ENCODE measurements at regions of chr1 and their contacts with region 1.

Region 1: DNA sequence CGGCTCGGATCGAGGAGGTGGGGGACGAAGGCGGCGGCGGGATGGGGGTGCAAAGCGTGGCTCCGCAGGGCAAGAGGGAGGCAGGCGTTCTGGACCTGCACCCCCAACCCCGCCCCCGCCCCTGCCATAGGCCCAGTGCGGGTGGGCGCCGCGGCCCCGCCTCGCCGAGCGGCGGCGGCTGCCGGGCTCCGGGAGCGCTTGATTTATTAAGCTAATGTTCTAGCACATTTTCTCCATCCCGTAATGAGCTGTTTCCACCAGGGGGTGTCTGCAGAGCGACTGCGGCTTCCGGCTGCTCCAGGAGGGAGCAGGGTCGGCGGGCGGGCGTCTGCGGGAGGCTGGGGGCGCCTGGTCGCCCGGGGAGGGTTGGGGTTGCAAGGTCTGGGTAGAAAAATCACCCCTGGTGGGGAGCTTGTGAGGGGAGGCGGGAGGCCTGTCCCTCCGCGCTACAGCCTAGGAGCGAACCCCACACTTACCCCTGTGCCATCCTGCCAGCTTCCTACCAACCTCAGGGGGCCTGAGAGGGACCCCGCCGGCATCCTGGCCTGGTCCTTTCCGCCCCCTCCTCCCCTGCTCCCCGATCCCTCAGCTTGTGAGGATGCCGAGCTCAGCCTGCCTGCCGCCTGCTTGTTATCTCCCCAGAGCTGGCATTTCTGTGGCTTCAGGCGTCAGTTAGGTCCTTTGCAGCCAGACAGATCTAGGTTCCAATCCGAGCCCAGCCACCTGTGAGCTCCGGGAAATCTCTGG is 48.5 kb upstream of the ACOT11 start:
- DNase-seq: peak in 1 of 3 donors; percentile 32
- ATAC-seq: peak; percentile 66 to 81 (median 78)
- H3K4me3 ChIP-seq: peak overlapping the region; percentile 14 to 46 (median 34)
- H3K27ac ChIP-seq: no peak overlapping the region
- H3K4me1 ChIP-seq: peaks cover 0 to 12% (median 0%) of the 10 kb centered on the region in 4 donors
- H3K27me3 ChIP-seq: no peaks in the 10 kb centered on the region
- CTCF ChIP-seq: peak; percentile 32 to 41 (median 40)
- POLR2A ChIP-seq: no peak

Region 2: GRCh38 chr1:54394104-54394503 is 105.4 kb before region 1 on chr1:
- intact Hi-C with region 1: no loop called
- DNase-seq: no peak
- ATAC-seq: no peak
- H3K4me3 ChIP-seq: no peak overlapping the region
- H3K27ac ChIP-seq: no peak overlapping the region
- H3K4me1 ChIP-seq: peaks cover 0 to 24% (median 12%) of the 10 kb centered on the region in 4 donors
- H3K27me3 ChIP-seq: no peaks in the 10 kb centered on the region
- CTCF ChIP-seq: no peak
- POLR2A ChIP-seq: no peak

Region 3: GRCh38 chr1:54404939-54405880 is 94.3 kb before region 1 on chr1:
- intact Hi-C with region 1: no loop called
- DNase-seq: peak; percentile 55 to 65 (median 56)
- ATAC-seq: peak; percentile 6 to 35 (median 16)
- H3K4me3 ChIP-seq: peak overlapping the region; percentile 62 to 79 (median 79)
- H3K27ac ChIP-seq: peak overlapping the region; percentile 2 to 47 (median 43)
- H3K4me1 ChIP-seq: peaks cover 0 to 8% (median 3%) of the 10 kb centered on the region in 4 donors
- H3K27me3 ChIP-seq: no peaks in the 10 kb centered on the region
- CTCF ChIP-seq: no peak
- POLR2A ChIP-seq: no peak

Region 4: DNA sequence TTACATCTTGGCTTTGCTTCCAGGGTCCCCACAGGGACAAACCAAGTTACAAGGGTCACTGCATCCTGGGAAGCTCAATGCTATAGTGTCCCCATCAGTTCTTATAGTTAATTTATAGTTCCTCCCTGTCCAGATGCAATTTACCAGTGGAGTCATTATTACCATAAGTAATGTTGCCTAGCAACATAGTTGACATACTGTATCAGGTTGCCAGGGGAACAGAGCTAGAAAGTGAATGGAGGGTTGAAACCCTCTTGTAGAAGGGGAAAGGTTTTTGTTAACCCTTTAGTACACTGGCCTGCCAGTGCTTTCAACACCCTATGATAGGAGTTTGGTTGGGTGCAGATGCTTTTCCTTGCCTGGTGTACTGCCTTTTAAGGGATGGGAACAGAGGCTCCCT is 181.8 kb after region 1 on chr1:
- intact Hi-C with region 1: no loop called
- DNase-seq: no peak
- ATAC-seq: no peak
- H3K4me3 ChIP-seq: no peak overlapping the region
- H3K27ac ChIP-seq: no peak overlapping the region
- H3K4me1 ChIP-seq: no peaks in the 10 kb centered on the region
- H3K27me3 ChIP-seq: no peaks in the 10 kb centered on the region
- CTCF ChIP-seq: no peak
- POLR2A ChIP-seq: no peak

Region 5: GRCh38 chr1:54800899-54801759 is 301.6 kb after region 1 on chr1 and contains the start of gene TTC22:
- intact Hi-C with region 1: loop called in 1 of 2 experiments (anchors 10 kb)
- DNase-seq: peak; percentile 78 to 82 (median 79)
- ATAC-seq: peak; percentile 59 to 77 (median 72)
- H3K4me3 ChIP-seq: peak within 1 kb of the TSS; percentile 66 to 74 (median 66)
- H3K27ac ChIP-seq: peak within 1 kb of the TSS; percentile 33 to 59 (median 54)
- H3K4me1 ChIP-seq: peaks cover 0 to 62% (median 15%) of the 10 kb centered on the region in 4 donors
- H3K27me3 ChIP-seq: no peaks in the 10 kb centered on the region
- CTCF ChIP-seq: peak; percentile 41 to 61 (median 52)
- POLR2A ChIP-seq: peak; percentile 45
- total RNA-seq, gene TTC22: 2.7 to 8.9 (median 4.7) TPM